ENCODE measurements at regions of chr20 and their contacts with region 1.

Region 1: GRCh38 chr20:35718972-35719635 is 19.9 kb downstream of the ROMO1 start:
- DNase-seq: no peak
- ATAC-seq: no peak
- H3K4me3 ChIP-seq: no peak overlapping the region
- H3K27ac ChIP-seq: no peak overlapping the region
- H3K4me1 ChIP-seq: no peaks in the 10 kb centered on the region
- H3K27me3 ChIP-seq: no peaks in the 10 kb centered on the region
- CTCF ChIP-seq: no peak
- POLR2A ChIP-seq: no peak
- RAD21 ChIP-seq: no peak

Region 2: GRCh38 chr20:35551503-35551902 is 167.6 kb before region 1 on chr20:
- CTCF ChIA-PET with region 1: no interaction called
- POLR2A ChIA-PET with region 1: interaction called, 12 read pairs
- dilution Hi-C with region 1: no loop called
- in situ Hi-C with region 1: no loop called
- intact Hi-C with region 1: no loop called
- DNase-seq: peak; percentile 13
- ATAC-seq: peak; percentile 42
- H3K4me3 ChIP-seq: no peak overlapping the region
- H3K27ac ChIP-seq: no peak overlapping the region
- H3K4me1 ChIP-seq: no peaks in the 10 kb centered on the region; the same call in 1 of the 2 replicates
- H3K27me3 ChIP-seq: no peaks in the 10 kb centered on the region
- CTCF ChIP-seq: no peak
- POLR2A ChIP-seq: no peak
- RAD21 ChIP-seq: no peak

Region 3: DNA sequence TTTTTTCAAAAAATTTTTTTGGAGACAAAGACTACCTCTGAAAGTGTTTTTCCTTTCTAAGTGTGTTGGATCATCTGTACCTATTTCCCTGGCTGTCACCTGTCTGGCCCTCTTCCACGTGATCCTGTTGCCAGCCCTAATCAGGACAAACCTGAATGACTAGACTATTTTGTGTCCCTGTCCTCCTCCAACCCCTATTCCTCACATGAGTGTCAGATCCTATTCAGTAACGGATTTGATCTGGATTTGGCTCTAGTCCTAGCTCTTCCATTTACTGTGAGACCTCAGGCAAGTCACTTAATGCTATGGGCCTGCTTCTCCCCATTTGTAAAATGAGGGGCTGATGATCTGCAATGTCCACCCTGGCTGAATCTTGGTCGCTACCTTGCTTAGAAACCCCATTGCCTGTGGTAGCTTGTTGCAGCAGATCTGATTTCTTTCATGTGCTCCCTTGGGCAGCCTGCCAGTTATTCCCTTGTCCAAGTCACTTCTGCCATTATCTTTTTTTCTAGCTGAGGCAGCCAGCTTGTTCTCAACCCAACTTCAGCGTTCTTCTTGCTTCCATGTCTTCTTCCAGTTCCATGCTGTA is 57.5 kb after region 1 on chr20:
- CTCF ChIA-PET with region 1: no interaction called
- POLR2A ChIA-PET with region 1: no interaction called
- dilution Hi-C with region 1: no loop called
- in situ Hi-C with region 1: no loop called
- intact Hi-C with region 1: no loop called
- DNase-seq: peak; percentile 55
- ATAC-seq: no peak
- H3K4me3 ChIP-seq: no peak overlapping the region
- H3K27ac ChIP-seq: no peak overlapping the region
- H3K4me1 ChIP-seq: peaks cover 10% of the 10 kb centered on the region
- H3K27me3 ChIP-seq: no peaks in the 10 kb centered on the region
- CTCF ChIP-seq: no peak
- POLR2A ChIP-seq: no peak
- RAD21 ChIP-seq: no peak